A673 (cell line): ENCODE measurements at regions of chr6 and their contacts with region 1.

Region 1: GRCh38 chr6:8707956-8708772 is 272.8 kb upstream of the SLC35B3 start:
- DNase-seq: peak; percentile 81
- H3K4me3 ChIP-seq: peak overlapping the region; percentile 20
- H3K27ac ChIP-seq: no peak overlapping the region
- H3K4me1 ChIP-seq: peaks cover 40% of the 10 kb centered on the region
- H3K27me3 ChIP-seq: no peaks in the 10 kb centered on the region
- CTCF ChIP-seq: peak; percentile 77

Region 2: DNA sequence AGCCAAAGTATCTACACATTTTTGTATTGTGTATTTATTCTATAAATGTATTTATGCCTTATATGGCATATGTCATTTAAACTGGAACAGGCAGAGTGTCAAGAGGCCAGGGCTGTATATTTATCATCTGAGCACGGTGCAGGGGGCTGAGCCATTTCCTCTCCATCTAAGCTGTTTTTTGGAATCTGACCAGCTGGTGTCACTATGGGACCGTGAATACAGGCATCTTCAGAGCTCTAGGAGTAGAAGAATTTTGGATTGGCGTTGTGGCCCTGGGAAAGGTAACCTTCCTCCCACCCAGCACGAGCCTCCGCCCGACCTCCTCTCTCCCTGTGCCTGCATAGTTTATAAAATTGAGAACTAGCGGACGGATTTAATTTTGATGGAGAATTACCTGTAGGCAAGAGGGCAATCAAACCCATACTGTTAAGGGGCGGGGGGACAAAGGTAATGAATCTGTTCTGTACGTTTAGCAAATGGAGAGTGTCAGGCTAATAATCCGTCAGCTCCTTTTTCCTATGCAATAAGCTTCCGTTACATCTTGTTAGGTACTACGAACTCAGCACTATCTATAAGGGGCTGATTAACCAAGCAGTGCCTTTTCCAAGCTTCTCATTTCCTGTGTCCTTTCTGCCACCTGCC is 576.8 kb before region 1 on chr6:
- CTCF ChIA-PET with region 1: no interaction called
- POLR2A ChIA-PET with region 1: no interaction called
- intact Hi-C with region 1: loop called (anchors 5 kb)
- DNase-seq: peak; percentile 89
- H3K4me3 ChIP-seq: no peak overlapping the region
- H3K27ac ChIP-seq: peak overlapping the region; percentile 22
- H3K4me1 ChIP-seq: peaks cover 25% of the 10 kb centered on the region
- H3K27me3 ChIP-seq: no peaks in the 10 kb centered on the region
- CTCF ChIP-seq: peak; percentile 81

Region 3: DNA sequence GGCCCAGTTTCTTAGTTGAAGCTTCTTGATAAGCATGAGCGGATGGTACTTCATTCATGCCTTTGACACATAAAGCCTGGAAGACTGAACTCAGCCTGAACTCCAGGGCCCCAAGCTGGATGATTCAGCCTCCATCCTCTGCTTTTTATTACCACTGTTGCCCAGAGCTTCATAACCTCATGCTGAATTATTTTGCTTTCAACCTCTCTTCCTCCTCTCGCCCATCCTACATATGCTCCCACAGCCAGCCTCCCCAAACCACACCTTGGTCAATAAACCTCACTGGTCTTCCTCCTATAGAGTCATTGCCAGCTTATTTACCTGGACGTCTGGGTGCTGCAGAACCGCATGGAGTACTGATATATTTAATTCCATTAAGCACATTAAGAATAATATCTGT is 332.2 kb before region 1 on chr6:
- CTCF ChIA-PET with region 1: no interaction called
- POLR2A ChIA-PET with region 1: no interaction called
- intact Hi-C with region 1: no loop called
- DNase-seq: no peak
- H3K4me3 ChIP-seq: no peak overlapping the region
- H3K27ac ChIP-seq: no peak overlapping the region
- H3K4me1 ChIP-seq: no peaks in the 10 kb centered on the region
- H3K27me3 ChIP-seq: no peaks in the 10 kb centered on the region
- CTCF ChIP-seq: no peak

Region 4: GRCh38 chr6:8539446-8539845 is 168.7 kb before region 1 on chr6:
- CTCF ChIA-PET with region 1: no interaction called
- POLR2A ChIA-PET with region 1: no interaction called
- intact Hi-C with region 1: loop called (anchors 2 kb)
- DNase-seq: peak; percentile 72
- H3K4me3 ChIP-seq: no peak overlapping the region
- H3K27ac ChIP-seq: no peak overlapping the region
- H3K4me1 ChIP-seq: no peaks in the 10 kb centered on the region
- H3K27me3 ChIP-seq: no peaks in the 10 kb centered on the region
- CTCF ChIP-seq: peak; percentile 62

Region 5: DNA sequence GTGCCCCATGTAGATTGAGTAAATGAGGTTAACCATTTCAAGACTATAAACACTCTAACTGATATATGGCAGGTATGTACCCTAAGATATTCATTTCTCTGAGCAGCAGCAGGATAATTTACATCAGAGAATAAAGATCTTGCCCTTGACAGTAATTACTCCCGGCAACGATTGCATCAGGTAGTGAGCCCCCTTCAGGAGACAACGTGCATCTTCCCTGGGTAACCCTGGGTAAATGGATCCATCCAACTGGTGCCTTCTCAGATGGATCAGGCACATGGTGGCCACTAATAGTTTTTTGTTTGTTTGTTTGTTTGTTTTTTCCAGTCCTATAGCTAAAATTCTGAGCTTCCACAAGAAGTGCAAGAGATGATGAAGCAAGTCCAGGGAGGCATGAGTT is 196.6 kb after region 1 on chr6:
- CTCF ChIA-PET with region 1: no interaction called
- POLR2A ChIA-PET with region 1: no interaction called
- intact Hi-C with region 1: loop called (anchors 5 kb)
- DNase-seq: peak; percentile 29
- H3K4me3 ChIP-seq: no peak overlapping the region
- H3K27ac ChIP-seq: no peak overlapping the region
- H3K4me1 ChIP-seq: peaks cover 15% of the 10 kb centered on the region
- H3K27me3 ChIP-seq: no peaks in the 10 kb centered on the region
- CTCF ChIP-seq: peak; percentile 61

Region 6: DNA sequence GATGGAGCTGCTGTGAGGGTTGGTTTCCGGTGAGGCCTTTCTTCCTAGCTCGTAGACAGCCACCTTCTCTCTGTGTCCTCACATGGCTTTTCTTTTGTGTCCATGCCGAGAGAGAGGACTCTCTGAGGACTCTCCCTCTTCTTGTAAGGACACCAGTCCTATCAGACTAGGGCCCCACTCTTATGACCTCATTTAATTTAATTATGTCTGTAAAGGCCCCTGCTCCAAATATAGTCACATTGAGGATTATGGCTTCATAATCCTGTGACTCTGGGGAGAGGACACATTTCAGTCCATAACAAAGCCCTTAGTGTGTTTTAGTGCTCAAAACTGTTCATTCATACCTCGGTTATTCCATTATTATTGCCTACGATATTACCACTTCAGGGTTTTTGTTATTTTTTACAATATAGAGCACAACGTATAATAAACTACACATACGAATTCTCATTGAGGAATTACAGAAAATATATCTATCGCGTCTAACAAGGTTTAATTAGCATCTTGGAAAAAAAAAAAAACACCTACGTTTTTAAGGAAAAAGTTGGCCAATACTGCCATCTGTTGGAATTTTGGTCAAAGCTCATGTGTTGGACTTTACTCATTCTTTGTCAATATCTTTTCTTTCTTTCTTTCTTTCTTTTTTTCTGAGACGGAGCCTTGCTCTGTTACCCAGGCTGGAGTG is 1726.7 kb after region 1 on chr6:
- CTCF ChIA-PET with region 1: interaction called, 17 read pairs
- POLR2A ChIA-PET with region 1: no interaction called
- intact Hi-C with region 1: no loop called
- DNase-seq: peak; percentile 73
- H3K4me3 ChIP-seq: no peak overlapping the region
- H3K27ac ChIP-seq: no peak overlapping the region
- H3K4me1 ChIP-seq: peaks cover 16% of the 10 kb centered on the region
- H3K27me3 ChIP-seq: no peaks in the 10 kb centered on the region
- CTCF ChIP-seq: peak; percentile 70